A673 (cell line): ENCODE measurements at regions of chr1 and their contacts with region 1.

Region 1: GRCh38 chr1:200875416-200875815 is 2.6 kb downstream of the GPR25 start:
- DNase-seq: no peak
- H3K4me3 ChIP-seq: no peak overlapping the region
- H3K27ac ChIP-seq: no peak overlapping the region
- H3K4me1 ChIP-seq: no peaks in the 10 kb centered on the region
- H3K27me3 ChIP-seq: peaks cover 8% of the 10 kb centered on the region
- CTCF ChIP-seq: no peak

Region 2: DNA sequence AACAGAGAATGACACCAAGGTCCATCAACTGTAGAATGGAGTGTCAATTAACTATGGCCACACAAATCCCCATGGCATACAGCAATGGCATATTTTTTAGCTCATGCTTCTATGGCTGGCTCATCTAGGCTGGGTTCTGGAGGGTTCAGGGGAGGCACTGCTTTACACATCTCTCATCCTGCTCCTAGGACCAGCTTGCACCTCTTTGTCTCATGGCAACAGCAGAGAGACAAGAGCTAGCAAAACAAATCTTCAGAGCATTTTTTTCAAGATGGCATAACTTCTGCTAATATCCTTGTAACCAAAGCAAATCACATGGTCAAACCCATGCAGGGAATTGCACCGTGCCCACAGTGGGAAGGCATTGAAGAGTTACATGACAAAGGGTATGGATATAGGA is 337.2 kb before region 1 on chr1:
- CTCF ChIA-PET with region 1: no interaction called
- POLR2A ChIA-PET with region 1: interaction called, 16 read pairs
- intact Hi-C with region 1: no loop called
- DNase-seq: no peak
- H3K4me3 ChIP-seq: no peak overlapping the region
- H3K27ac ChIP-seq: no peak overlapping the region
- H3K4me1 ChIP-seq: no peaks in the 10 kb centered on the region
- H3K27me3 ChIP-seq: no peaks in the 10 kb centered on the region
- CTCF ChIP-seq: no peak

Region 3: GRCh38 chr1:201409440-201409839 is 534.0 kb after region 1 on chr1:
- CTCF ChIA-PET with region 1: no interaction called
- POLR2A ChIA-PET with region 1: no interaction called
- intact Hi-C with region 1: no loop called
- DNase-seq: no peak
- H3K4me3 ChIP-seq: no peak overlapping the region
- H3K27ac ChIP-seq: no peak overlapping the region
- H3K4me1 ChIP-seq: no peaks in the 10 kb centered on the region
- H3K27me3 ChIP-seq: no peaks in the 10 kb centered on the region
- CTCF ChIP-seq: no peak